CD4-positive, alpha-beta T cell (primary cell): ENCODE measurements at regions of chr15 and their contacts with region 1.

Region 1: GRCh38 chr15:98658831-98659699 is 10.7 kb downstream of the IGF1R start:
- DNase-seq: peak in 7 of 14 experiments; percentile 10 to 73 (median 52)
- ATAC-seq: peak; percentile 81
- H3K4me3 ChIP-seq: no peak overlapping the region
- H3K4me3 Mint-ChIP-seq: no peak overlapping the region
- H3K27ac ChIP-seq: no peak overlapping the region
- H3K27ac Mint-ChIP-seq: no peak overlapping the region
- H3K4me1 ChIP-seq: peaks cover 9% of the 10 kb centered on the region
- H3K4me1 Mint-ChIP-seq: peaks cover 56% of the 10 kb centered on the region
- H3K27me3 ChIP-seq: no peaks in the 10 kb centered on the region
- H3K27me3 Mint-ChIP-seq: no peaks in the 10 kb centered on the region
- CTCF ChIP-seq: peak; percentile 95

Region 2: DNA sequence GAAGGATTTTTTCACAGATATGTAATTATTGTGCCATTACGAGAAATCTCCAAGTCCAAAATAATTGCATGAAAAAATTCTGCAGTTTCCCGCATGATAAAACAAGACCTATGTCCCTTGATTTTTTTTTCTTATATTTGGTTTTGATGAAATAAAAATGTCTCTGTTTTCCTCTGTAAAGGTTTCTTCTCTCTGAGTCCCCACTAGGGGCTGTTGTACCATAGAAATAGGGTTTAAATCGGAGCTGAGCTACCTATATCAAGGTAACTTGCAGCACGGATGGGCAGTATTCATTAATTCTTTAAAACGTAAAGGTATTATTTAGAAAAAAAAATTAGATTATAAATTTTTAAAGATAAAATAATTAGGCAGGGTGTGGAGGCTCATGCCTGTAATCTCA is 77.3 kb before region 1 on chr15:
- CTCF ChIA-PET with region 1: interaction called, 6 read pairs
- POLR2A ChIA-PET with region 1: no interaction called
- intact Hi-C with region 1: loop called in 1 of 2 experiments (anchors 2 kb)
- DNase-seq: peak in 3 of 14 experiments; percentile 19 to 39 (median 33)
- ATAC-seq: peak; percentile 49
- H3K4me3 ChIP-seq: no peak overlapping the region
- H3K4me3 Mint-ChIP-seq: no peak overlapping the region
- H3K27ac ChIP-seq: no peak overlapping the region
- H3K27ac Mint-ChIP-seq: no peak overlapping the region
- H3K4me1 ChIP-seq: no peaks in the 10 kb centered on the region
- H3K4me1 Mint-ChIP-seq: peaks cover 9% of the 10 kb centered on the region
- H3K27me3 ChIP-seq: peaks cover 13 to 21% of the 10 kb centered on the region in 2 experiments
- H3K27me3 Mint-ChIP-seq: peaks cover 48% of the 10 kb centered on the region
- CTCF ChIP-seq: peak; percentile 45

Region 3: GRCh38 chr15:98700519-98700918 is 41.5 kb after region 1 on chr15:
- CTCF ChIA-PET with region 1: no interaction called
- POLR2A ChIA-PET with region 1: no interaction called
- intact Hi-C with region 1: loop called (anchors 5 to 10 kb)
- DNase-seq: no peak
- ATAC-seq: no peak
- H3K4me3 ChIP-seq: no peak overlapping the region
- H3K4me3 Mint-ChIP-seq: no peak overlapping the region
- H3K27ac ChIP-seq: no peak overlapping the region
- H3K27ac Mint-ChIP-seq: peak overlapping the region; percentile 54
- H3K4me1 ChIP-seq: peaks cover 36% of the 10 kb centered on the region
- H3K4me1 Mint-ChIP-seq: peaks cover 67% of the 10 kb centered on the region
- H3K27me3 ChIP-seq: no peaks in the 10 kb centered on the region
- H3K27me3 Mint-ChIP-seq: no peaks in the 10 kb centered on the region
- CTCF ChIP-seq: no peak